Head of caudate nucleus (tissue), 42 donors: ENCODE measurements at regions of chr16 and their contacts with region 1.

Region 1: GRCh38 chr16:30747799-30748634 is at the start of gene PHKG2:
- DNase-seq: peak; percentile 98 to 100 (median 99)

Region 2: GRCh38 chr16:30761928-30762810 is 14.2 kb after region 1 on chr16 and contains the starts of genes CFAP119 and RNF40:
- intact Hi-C with region 1: loop called (anchors 2 kb)
- DNase-seq: peak; percentile 94 to 99 (median 97)